Tibial artery (tissue), 4 donors: ENCODE measurements at regions of chr17 and their contacts with region 1.

Region 1: DNA sequence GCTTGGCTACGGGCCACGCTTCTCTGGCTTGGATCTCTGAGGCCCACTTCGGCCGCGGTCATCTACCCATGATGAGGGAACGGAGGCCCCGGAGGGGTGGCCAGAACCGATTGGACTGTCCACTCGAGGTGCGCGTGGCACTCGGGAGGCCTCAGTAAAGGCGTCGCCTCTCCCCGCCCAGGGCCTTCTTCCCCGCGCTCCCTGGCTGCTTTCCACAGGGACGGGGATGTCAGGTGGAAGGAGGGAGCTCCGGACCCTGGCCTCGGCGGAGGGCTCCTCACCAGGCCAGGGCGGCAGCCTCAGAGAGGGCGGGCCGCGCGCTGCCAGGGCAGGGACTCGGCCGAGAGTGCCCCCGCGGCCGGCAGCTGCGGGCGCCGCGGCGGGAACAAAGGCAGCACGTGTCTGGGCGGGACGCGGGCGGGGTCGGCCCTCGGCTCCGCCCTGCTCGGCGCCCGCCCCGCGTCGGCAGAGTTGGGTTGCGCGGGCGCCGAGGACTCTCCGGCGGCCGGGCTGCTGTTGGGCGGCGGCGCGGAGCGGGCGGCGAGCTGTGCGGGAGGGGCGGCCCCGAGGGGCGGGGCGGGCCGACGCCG is 587 bp upstream of the CDK5R1 start:
- DNase-seq: peak in 1 of 2 donors; percentile 49
- H3K4me3 ChIP-seq: peak overlapping the region; percentile 62 to 63
- H3K27ac ChIP-seq: peak overlapping the region; percentile 67 to 72
- H3K4me1 ChIP-seq: peaks cover 0 to 38% (median 30%) of the 10 kb centered on the region in 4 donors
- H3K27me3 ChIP-seq: no peaks in the 10 kb centered on the region
- CTCF ChIP-seq: no peak

Region 2: GRCh38 chr17:32769839-32770238 is 283.6 kb after region 1 on chr17:
- intact Hi-C with region 1: loop called (anchors 10 kb)
- DNase-seq: no peak
- H3K4me3 ChIP-seq: no peak overlapping the region
- H3K27ac ChIP-seq: no peak overlapping the region
- H3K4me1 ChIP-seq: no peaks in the 10 kb centered on the region
- H3K27me3 ChIP-seq: no peaks in the 10 kb centered on the region
- CTCF ChIP-seq: no peak

Region 3: DNA sequence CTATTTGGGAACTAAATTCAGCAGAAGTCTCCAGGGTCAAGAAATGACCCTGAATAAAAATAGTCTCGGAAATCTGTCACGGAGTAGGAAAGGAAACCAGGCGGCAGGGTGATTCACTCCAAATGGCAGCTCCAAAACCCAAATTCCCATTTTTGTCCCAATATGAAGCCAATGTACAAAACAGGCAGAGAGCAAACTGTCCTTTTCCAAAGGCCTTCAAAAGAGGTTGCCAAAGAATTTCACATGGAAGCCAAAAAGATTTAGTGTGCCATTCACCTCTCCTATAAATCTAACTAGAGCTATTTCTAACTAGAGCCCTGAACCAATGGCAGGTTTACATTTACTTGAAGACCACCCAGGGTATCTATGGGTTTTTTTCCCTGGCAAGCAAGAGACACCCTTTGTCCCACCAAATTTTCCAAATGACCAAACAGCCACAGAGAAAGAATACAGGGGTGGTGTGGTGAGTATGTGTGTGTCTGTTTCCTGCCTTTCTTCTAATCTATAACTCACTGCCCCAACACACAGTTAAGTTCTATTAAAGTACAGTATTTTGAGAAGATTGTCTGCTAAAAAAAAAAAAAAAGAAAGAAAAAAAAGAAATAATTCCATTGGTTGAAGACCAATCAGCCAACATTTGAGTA is 383.9 kb after region 1 on chr17:
- intact Hi-C with region 1: loop called (anchors 5 kb)
- DNase-seq: peak; percentile 51 to 78
- H3K4me3 ChIP-seq: no peak overlapping the region
- H3K27ac ChIP-seq: peak overlapping the region; percentile 61 to 79
- H3K4me1 ChIP-seq: peaks cover 7 to 98% (median 63%) of the 10 kb centered on the region in 4 donors
- H3K27me3 ChIP-seq: no peaks in the 10 kb centered on the region
- CTCF ChIP-seq: no peak